K562 (cell line): ENCODE measurements at regions of chr1 and their contacts with region 1.

Region 1: DNA sequence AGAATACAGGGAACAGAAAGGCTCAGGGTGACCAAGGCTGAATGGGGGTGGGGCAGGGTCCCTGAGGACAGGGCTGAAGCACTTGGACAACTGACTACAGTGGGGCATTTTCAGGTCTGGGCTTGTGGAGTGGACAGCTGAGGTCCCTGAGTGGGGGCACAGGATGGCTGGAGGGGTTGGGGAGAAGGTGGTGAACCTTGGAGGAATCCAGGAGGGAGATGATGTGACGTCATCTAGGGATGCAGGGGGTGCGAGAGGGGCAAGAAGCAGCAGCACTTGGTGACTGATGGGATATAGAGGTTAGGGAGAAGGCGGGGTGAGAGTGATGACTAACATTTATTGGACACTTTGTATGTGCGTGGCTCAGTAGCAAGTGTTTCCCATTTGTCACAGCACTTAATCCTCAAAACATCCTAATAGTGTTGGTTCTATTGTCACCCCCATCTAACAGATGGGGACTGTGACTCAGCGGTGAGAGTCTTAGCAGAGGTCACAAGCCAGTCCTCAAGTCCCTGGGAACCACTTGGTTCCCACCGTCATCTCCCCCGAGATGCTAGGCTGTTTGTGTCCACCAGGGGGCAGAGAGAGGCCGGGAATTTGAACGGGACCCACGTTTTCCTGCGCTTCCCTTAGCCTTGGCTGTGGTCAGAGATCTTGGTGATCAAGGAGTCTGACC is 27.9 kb upstream of the BMP8B start:
- DNase-seq: peak; percentile 84 to 88 (median 86)
- ATAC-seq: peak; percentile 92
- H3K4me3 ChIP-seq: no peak overlapping the region
- H3K27ac ChIP-seq: no peak overlapping the region
- H3K4me1 ChIP-seq: peaks cover 9 to 11% of the 10 kb centered on the region in 2 experiments; a peak in 4 of 5 replicates
- H3K27me3 ChIP-seq: peaks cover 2 to 8% of the 10 kb centered on the region in 2 experiments; a peak in 2 of 5 replicates
- CTCF ChIP-seq: peak; percentile 87 to 94 (median 91)
- EP300 ChIP-seq: no peak
- POLR2A ChIP-seq: no peak
- RAD21 ChIP-seq: peak; percentile 95 to 99

Region 2: GRCh38 chr1:39973503-39974135 is 157.1 kb after region 1 on chr1:
- CTCF ChIA-PET with region 1: interaction called, 11 read pairs
- POLR2A ChIA-PET with region 1: interaction called, 3 read pairs
- in situ Hi-C with region 1: no loop called
- intact Hi-C with region 1: loop called (anchors 1 kb)
- DNase-seq: peak; percentile 74 to 87 (median 82)
- ATAC-seq: peak; percentile 86
- H3K4me3 ChIP-seq: no peak overlapping the region
- H3K27ac ChIP-seq: no peak overlapping the region
- H3K4me1 ChIP-seq: peaks cover 4% of the 10 kb centered on the region in 2 experiments; a peak in 4 of 5 replicates
- H3K27me3 ChIP-seq: peaks cover 4 to 8% of the 10 kb centered on the region in 2 experiments; a peak in 2 of 5 replicates
- CTCF ChIP-seq: peak; percentile 96 to 99 (median 98)
- EP300 ChIP-seq: no peak
- POLR2A ChIP-seq: no peak
- RAD21 ChIP-seq: peak; percentile 97 to 99